ENCODE measurements at regions of chr6 and their contacts with region 1.

Region 1: GRCh38 chr6:111793711-111794111 is 79.5 kb downstream of the FYN start:
- DNase-seq: peak; percentile 84
- ATAC-seq: peak; percentile 72
- H3K4me3 Mint-ChIP-seq: peak overlapping the region; percentile 73
- H3K27ac Mint-ChIP-seq: peak overlapping the region; percentile 95
- H3K4me1 Mint-ChIP-seq: peaks cover 71% of the 10 kb centered on the region
- H3K27me3 Mint-ChIP-seq: no peaks in the 10 kb centered on the region
- CTCF ChIP-seq: no peak

Region 2: GRCh38 chr6:111837641-111838500 is 44.2 kb after region 1 on chr6:
- CTCF ChIA-PET with region 1: interaction called, 3 read pairs
- POLR2A ChIA-PET with region 1: interaction called, 15 read pairs
- intact Hi-C with region 1: no loop called
- DNase-seq: peak; percentile 81
- ATAC-seq: peak; percentile 77
- H3K4me3 Mint-ChIP-seq: peak overlapping the region; percentile 67
- H3K27ac Mint-ChIP-seq: no peak overlapping the region
- H3K4me1 Mint-ChIP-seq: peaks cover 73% of the 10 kb centered on the region
- H3K27me3 Mint-ChIP-seq: no peaks in the 10 kb centered on the region
- CTCF ChIP-seq: no peak

Measured in activated CD8-positive, alpha-beta T cell treated with anti-CD3 and anti-CD28 coated beads for 36 hours (primary cell).